Activated CD4-positive, alpha-beta memory T cell treated with anti-CD3 and anti-CD28 coated beads for 36 hours (primary cell): ENCODE measurements at regions of chr21 and their contacts with region 1.

Region 1: DNA sequence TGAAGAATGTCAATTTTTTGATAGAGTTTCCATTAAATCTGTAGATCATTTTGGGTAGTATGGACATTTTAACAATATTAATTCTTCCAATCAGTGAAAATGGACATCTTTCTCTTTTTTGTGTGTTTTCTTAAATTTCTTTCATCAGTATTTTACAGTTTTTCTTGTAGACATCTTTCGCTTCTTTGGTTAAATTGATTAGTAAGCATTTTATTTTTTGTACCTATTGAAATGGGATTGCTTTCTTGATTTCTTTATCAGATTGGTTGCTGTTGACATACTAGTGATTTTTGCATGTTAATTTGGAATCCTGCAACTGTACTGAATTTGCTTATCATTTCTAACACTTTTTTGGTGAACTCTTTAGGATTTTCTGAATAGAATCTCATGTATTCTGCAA is 683.2 kb upstream of the NCAM2 start:
- DNase-seq: no peak
- H3K4me3 Mint-ChIP-seq: no peak overlapping the region
- H3K27ac Mint-ChIP-seq: no peak overlapping the region
- H3K4me1 Mint-ChIP-seq: no peaks in the 10 kb centered on the region
- H3K27me3 Mint-ChIP-seq: no peaks in the 10 kb centered on the region

Region 2: GRCh38 chr21:20341431-20341830 is 26.4 kb after region 1 on chr21:
- CTCF ChIA-PET with region 1: no interaction called
- POLR2A ChIA-PET with region 1: no interaction called
- intact Hi-C with region 1: loop called (anchors 1 kb)
- DNase-seq: no peak
- H3K4me3 Mint-ChIP-seq: no peak overlapping the region
- H3K27ac Mint-ChIP-seq: no peak overlapping the region
- H3K4me1 Mint-ChIP-seq: no peaks in the 10 kb centered on the region
- H3K27me3 Mint-ChIP-seq: no peaks in the 10 kb centered on the region